ENCODE measurements at regions of chrX and their contacts with region 1.

Region 1: GRCh38 chrX:155070975-155071693 is at the starts of genes BRCC3, CMC4 and MTCP1:
- DNase-seq: peak; percentile 49 to 89 (median 70)
- ATAC-seq: peak; percentile 77
- H3K4me3 ChIP-seq: peak within 1 kb of the TSS; percentile 83
- H3K4me3 Mint-ChIP-seq: peak within 1 kb of the TSS; percentile 89
- H3K27ac ChIP-seq: peak within 1 kb of the TSS; percentile 83 to 84
- H3K27ac Mint-ChIP-seq: peak within 1 kb of the TSS; percentile 97
- H3K4me1 ChIP-seq: peaks cover 15% of the 10 kb centered on the region
- H3K4me1 Mint-ChIP-seq: peaks cover 60% of the 10 kb centered on the region
- H3K27me3 ChIP-seq: no peaks in the 10 kb centered on the region
- H3K27me3 Mint-ChIP-seq: no peaks in the 10 kb centered on the region
- CTCF ChIP-seq: no peak
- total RNA-seq, gene BRCC3: 12.6 to 12.8 TPM
- total RNA-seq, gene CMC4: 5.6 to 6.5 TPM
- total RNA-seq, gene MTCP1: 17.0 to 18.9 TPM

Region 2: GRCh38 chrX:154775419-154776349 is 295.4 kb before region 1 on chrX:
- CTCF ChIA-PET with region 1: no interaction called
- POLR2A ChIA-PET with region 1: no interaction called
- intact Hi-C with region 1: no loop called
- DNase-seq: no peak
- ATAC-seq: peak; percentile 24
- H3K4me3 ChIP-seq: no peak overlapping the region
- H3K4me3 Mint-ChIP-seq: no peak overlapping the region
- H3K27ac ChIP-seq: no peak overlapping the region
- H3K27ac Mint-ChIP-seq: peak overlapping the region; percentile 30
- H3K4me1 ChIP-seq: peaks cover 9% of the 10 kb centered on the region
- H3K4me1 Mint-ChIP-seq: peaks cover 10% of the 10 kb centered on the region
- H3K27me3 ChIP-seq: no peaks in the 10 kb centered on the region
- H3K27me3 Mint-ChIP-seq: no peaks in the 10 kb centered on the region
- CTCF ChIP-seq: no peak

Region 3: GRCh38 chrX:154804957-154805695 is 266.0 kb before region 1 on chrX and contains the start of gene MPP1:
- CTCF ChIA-PET with region 1: no interaction called
- POLR2A ChIA-PET with region 1: no interaction called
- intact Hi-C with region 1: loop called in 1 of 2 experiments (anchors 5 kb)
- DNase-seq: peak; percentile 50 to 88 (median 68)
- ATAC-seq: peak; percentile 98
- H3K4me3 ChIP-seq: peak within 1 kb of the TSS; percentile 80
- H3K4me3 Mint-ChIP-seq: peak within 1 kb of the TSS; percentile 88
- H3K27ac ChIP-seq: no peak within 1 kb of the TSS
- H3K27ac Mint-ChIP-seq: peak within 1 kb of the TSS; percentile 40
- H3K4me1 ChIP-seq: peaks cover 36% of the 10 kb centered on the region
- H3K4me1 Mint-ChIP-seq: peaks cover 45% of the 10 kb centered on the region
- H3K27me3 ChIP-seq: no peaks in the 10 kb centered on the region
- H3K27me3 Mint-ChIP-seq: no peaks in the 10 kb centered on the region
- CTCF ChIP-seq: no peak
- total RNA-seq, gene MPP1: 10.7 to 13.1 TPM

Region 4: DNA sequence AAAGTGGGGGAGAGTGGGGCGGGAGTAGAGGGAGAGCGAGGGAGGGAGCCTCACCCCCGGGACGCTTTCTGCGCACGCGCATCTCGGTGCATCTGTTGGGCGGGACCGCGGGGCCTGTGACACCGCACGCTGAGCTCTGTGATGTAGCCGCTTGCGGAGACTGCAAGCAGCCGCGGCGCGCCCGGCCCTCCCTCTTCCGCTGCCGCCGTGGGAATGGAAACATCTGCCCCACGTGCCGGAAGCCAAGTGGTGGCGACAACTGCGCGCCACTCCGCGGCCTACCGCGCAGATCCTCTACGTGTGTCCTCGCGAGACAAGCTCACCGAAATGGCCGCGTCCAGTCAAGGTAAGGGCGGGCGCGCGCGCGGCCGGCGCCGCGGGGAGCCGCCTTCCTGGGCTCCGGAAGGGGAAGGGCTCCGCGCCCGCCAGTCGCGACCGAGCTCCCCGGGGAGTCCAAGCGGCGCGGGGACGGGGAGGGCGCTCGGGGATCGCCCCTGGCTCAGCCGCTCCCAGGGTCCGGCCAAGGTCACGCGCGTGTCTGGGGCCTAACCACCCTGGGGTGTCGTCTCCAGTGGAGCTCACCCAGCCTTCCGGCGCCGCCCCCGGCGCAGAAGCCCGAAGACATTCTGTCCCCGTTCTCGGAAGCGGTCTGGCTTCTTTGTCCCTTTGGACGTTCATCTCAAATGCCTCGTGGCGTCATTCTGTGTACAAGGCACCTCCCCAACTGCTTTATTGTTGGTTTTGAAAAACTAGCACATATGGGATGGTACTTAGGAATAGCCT is 44.2 kb before region 1 on chrX and contains the start of gene FUNDC2:
- CTCF ChIA-PET with region 1: no interaction called
- POLR2A ChIA-PET with region 1: interaction called, 7 read pairs
- intact Hi-C with region 1: loop called (anchors 1 to 2 kb)
- DNase-seq: peak; percentile 87 to 98 (median 92)
- ATAC-seq: peak; percentile 86
- H3K4me3 ChIP-seq: peak within 1 kb of the TSS; percentile 88
- H3K4me3 Mint-ChIP-seq: peak within 1 kb of the TSS; percentile 95
- H3K27ac ChIP-seq: peak within 1 kb of the TSS; percentile 88 to 94
- H3K27ac Mint-ChIP-seq: peak within 1 kb of the TSS; percentile 98
- H3K4me1 ChIP-seq: peaks cover 8% of the 10 kb centered on the region
- H3K4me1 Mint-ChIP-seq: peaks cover 42% of the 10 kb centered on the region
- H3K27me3 ChIP-seq: no peaks in the 10 kb centered on the region
- H3K27me3 Mint-ChIP-seq: no peaks in the 10 kb centered on the region
- CTCF ChIP-seq: no peak
- total RNA-seq, gene FUNDC2: 37.2 to 37.4 TPM

Region 5: GRCh38 chrX:155188786-155189185 is 117.7 kb after region 1 on chrX:
- CTCF ChIA-PET with region 1: no interaction called
- POLR2A ChIA-PET with region 1: no interaction called
- intact Hi-C with region 1: no loop called
- DNase-seq: peak in 8 of 14 experiments; percentile 0 to 76 (median 28)
- ATAC-seq: peak; percentile 100
- H3K4me3 ChIP-seq: peak overlapping the region; percentile 12
- H3K4me3 Mint-ChIP-seq: peak overlapping the region; percentile 44
- H3K27ac ChIP-seq: peak overlapping the region in 1 of 2 donors; percentile 4
- H3K27ac Mint-ChIP-seq: peak overlapping the region; percentile 68
- H3K4me1 ChIP-seq: peaks cover 3% of the 10 kb centered on the region
- H3K4me1 Mint-ChIP-seq: peaks cover 49% of the 10 kb centered on the region
- H3K27me3 ChIP-seq: no peaks in the 10 kb centered on the region
- H3K27me3 Mint-ChIP-seq: no peaks in the 10 kb centered on the region
- CTCF ChIP-seq: no peak

Region 6: DNA sequence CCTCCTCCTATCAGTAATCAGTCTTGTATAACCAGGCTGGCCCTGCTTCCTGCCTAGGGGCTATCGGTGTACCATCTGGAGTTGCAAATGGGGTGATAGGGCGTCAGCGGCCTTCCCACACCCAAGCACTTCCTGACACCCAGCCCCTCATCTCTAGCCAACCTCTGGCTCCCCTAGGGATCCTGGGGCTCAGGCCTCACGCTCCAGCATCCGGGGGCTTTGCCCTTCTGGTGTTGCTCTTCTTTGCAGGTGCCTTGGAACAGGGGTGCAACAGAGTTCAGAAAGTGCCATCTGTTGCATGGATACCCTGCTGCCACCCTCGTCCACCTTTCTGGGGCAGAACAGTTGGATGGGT is 930.5 kb after region 1 on chrX:
- CTCF ChIA-PET with region 1: no interaction called
- POLR2A ChIA-PET with region 1: no interaction called
- intact Hi-C with region 1: no loop called
- DNase-seq: peak in 3 of 14 experiments; percentile 18 to 35 (median 29)
- ATAC-seq: no peak
- H3K4me3 ChIP-seq: no peak overlapping the region
- H3K4me3 Mint-ChIP-seq: no peak overlapping the region
- H3K27ac ChIP-seq: no peak overlapping the region
- H3K27ac Mint-ChIP-seq: peak overlapping the region; percentile 10
- H3K4me1 ChIP-seq: peaks cover 31% of the 10 kb centered on the region
- H3K4me1 Mint-ChIP-seq: peaks cover 16% of the 10 kb centered on the region
- H3K27me3 ChIP-seq: no peaks in the 10 kb centered on the region
- H3K27me3 Mint-ChIP-seq: no peaks in the 10 kb centered on the region
- CTCF ChIP-seq: no peak

Measured in CD4-positive, alpha-beta T cell (primary cell).